SK-N-SH (cell line): ENCODE measurements at regions of chr15 and their contacts with region 1.

Region 1: GRCh38 chr15:51162865-51163762 is 68.4 kb upstream of the TNFAIP8L3 start:
- DNase-seq: peak; percentile 84
- H3K4me3 ChIP-seq: peak overlapping the region; percentile 6 to 33; a peak in 3 of 4 replicates
- H3K27ac ChIP-seq: peak overlapping the region; percentile 25 to 30; a peak in 2 of 4 replicates
- H3K4me1 ChIP-seq: peaks cover 0 to 6% of the 10 kb centered on the region in 2 experiments; a peak in 2 of 4 replicates
- H3K27me3 ChIP-seq: no peaks in the 10 kb centered on the region; the same call in 1 of the 2 replicates
- CTCF ChIP-seq: peak; percentile 99
- EP300 ChIP-seq: no peak
- RAD21 ChIP-seq: peak; percentile 91

Region 2: DNA sequence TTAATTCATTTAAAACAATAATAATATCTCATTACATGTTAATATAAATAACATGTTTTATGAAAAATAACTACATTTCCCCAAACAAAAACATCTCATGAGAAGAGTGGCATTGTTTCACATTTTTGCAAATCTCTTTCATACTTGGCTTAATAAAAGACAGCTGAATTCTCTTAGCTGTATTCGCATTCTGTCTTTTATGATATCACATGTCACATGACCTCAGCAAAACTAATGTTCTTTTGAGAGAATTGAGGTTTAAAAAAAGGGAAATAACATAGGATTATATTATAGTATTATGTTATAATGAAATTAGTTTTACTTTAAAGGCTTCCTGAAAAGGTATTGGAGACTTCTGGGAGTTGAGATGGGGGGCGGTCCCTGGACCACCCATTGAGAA is 349.2 kb before region 1 on chr15:
- CTCF ChIA-PET with region 1: no interaction called
- POLR2A ChIA-PET with region 1: no interaction called
- DNase-seq: no peak
- H3K4me3 ChIP-seq: no peak overlapping the region
- H3K27ac ChIP-seq: no peak overlapping the region
- H3K4me1 ChIP-seq: 0 out of 4 replicates have a peak, but pooled peaks cover 0 to 1% of the 10 kb centered on the region in 2 experiments
- H3K27me3 ChIP-seq: no peaks in the 10 kb centered on the region
- CTCF ChIP-seq: no peak
- EP300 ChIP-seq: no peak
- RAD21 ChIP-seq: no peak

Region 3: GRCh38 chr15:51180011-51180410 is 16.9 kb after region 1 on chr15:
- CTCF ChIA-PET with region 1: interaction called, 41 read pairs
- POLR2A ChIA-PET with region 1: no interaction called
- DNase-seq: no peak
- H3K4me3 ChIP-seq: no peak overlapping the region
- H3K27ac ChIP-seq: no peak overlapping the region
- H3K4me1 ChIP-seq: no peaks in the 10 kb centered on the region
- H3K27me3 ChIP-seq: peaks cover 11% of the 10 kb centered on the region; the same call in 1 of the 2 replicates
- CTCF ChIP-seq: no peak
- EP300 ChIP-seq: no peak
- RAD21 ChIP-seq: no peak

Region 4: GRCh38 chr15:51203797-51204196 is 40.7 kb after region 1 on chr15:
- CTCF ChIA-PET with region 1: interaction called, 37 read pairs
- POLR2A ChIA-PET with region 1: no interaction called
- DNase-seq: no peak
- H3K4me3 ChIP-seq: no peak overlapping the region
- H3K27ac ChIP-seq: no peak overlapping the region
- H3K4me1 ChIP-seq: no peaks in the 10 kb centered on the region; a peak in 1 of 4 replicates
- H3K27me3 ChIP-seq: no peaks in the 10 kb centered on the region; the same call in 1 of the 2 replicates
- CTCF ChIP-seq: no peak
- EP300 ChIP-seq: no peak
- RAD21 ChIP-seq: no peak

Region 5: GRCh38 chr15:51281368-51281967 is 118.4 kb after region 1 on chr15:
- CTCF ChIA-PET with region 1: interaction called, 13 read pairs
- POLR2A ChIA-PET with region 1: no interaction called
- DNase-seq: peak; percentile 60
- H3K4me3 ChIP-seq: no peak overlapping the region; a peak in 1 of 4 replicates
- H3K27ac ChIP-seq: no peak overlapping the region
- H3K4me1 ChIP-seq: peaks cover 0 to 8% of the 10 kb centered on the region in 2 experiments; a peak in 1 of 4 replicates
- H3K27me3 ChIP-seq: peaks cover 21% of the 10 kb centered on the region; the same call in 1 of the 2 replicates
- CTCF ChIP-seq: peak; percentile 52
- EP300 ChIP-seq: no peak
- RAD21 ChIP-seq: peak; percentile 70

Region 6: DNA sequence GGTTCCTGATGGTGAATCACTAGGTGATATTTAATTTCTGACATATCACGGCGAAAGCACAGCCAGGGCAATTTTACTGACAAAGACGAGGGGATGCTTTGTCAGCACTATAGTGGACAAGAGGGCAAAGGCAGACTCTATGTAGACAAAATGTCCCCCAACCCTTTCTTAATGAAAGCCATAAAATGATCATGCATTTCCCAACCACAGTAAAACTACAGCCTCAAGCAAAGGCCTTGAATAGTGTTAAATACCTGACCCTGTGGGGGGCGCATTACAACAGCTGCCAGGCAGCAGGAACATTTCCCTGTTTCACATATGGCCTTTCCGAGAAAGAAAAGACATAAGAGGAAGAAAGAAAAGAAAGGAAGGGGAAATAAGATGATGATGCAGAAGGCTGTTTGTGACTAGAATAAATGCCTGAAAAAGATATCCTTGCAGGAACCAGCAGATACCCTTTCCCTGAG is 227.9 kb after region 1 on chr15:
- CTCF ChIA-PET with region 1: interaction called, 40 read pairs
- POLR2A ChIA-PET with region 1: no interaction called
- DNase-seq: no peak
- H3K4me3 ChIP-seq: no peak overlapping the region
- H3K27ac ChIP-seq: no peak overlapping the region
- H3K4me1 ChIP-seq: peaks cover 0 to 6% of the 10 kb centered on the region in 2 experiments; a peak in 1 of 4 replicates
- H3K27me3 ChIP-seq: no peaks in the 10 kb centered on the region; the same call in 1 of the 2 replicates
- CTCF ChIP-seq: no peak
- EP300 ChIP-seq: no peak
- RAD21 ChIP-seq: no peak